ENCODE measurements at regions of chr7 and their contacts with region 1.

Region 1: GRCh38 chr7:21261627-21262594 is 166.0 kb upstream of the SP4 start:
- DNase-seq: peak; percentile 12
- ATAC-seq: peak; percentile 99
- H3K4me3 ChIP-seq: no peak overlapping the region
- H3K27ac ChIP-seq: no peak overlapping the region
- H3K4me1 ChIP-seq: peaks cover 2% of the 10 kb centered on the region; the same call in 1 of the 2 replicates
- H3K27me3 ChIP-seq: no peaks in the 10 kb centered on the region
- CTCF ChIP-seq: peak; percentile 62 to 79 (median 72)
- EP300 ChIP-seq: no peak
- POLR2A ChIP-seq: no peak
- RAD21 ChIP-seq: peak; percentile 83

Region 2: GRCh38 chr7:21192657-21193056 is 69.3 kb before region 1 on chr7:
- CTCF ChIA-PET with region 1: no interaction called
- POLR2A ChIA-PET with region 1: no interaction called
- RAD21 ChIA-PET with region 1: no interaction called
- SMC1A ChIA-PET with region 1: no interaction called
- in situ Hi-C with region 1: no loop called
- intact Hi-C with region 1: no loop called
- DNase-seq: no peak
- ATAC-seq: no peak
- H3K4me3 ChIP-seq: no peak overlapping the region
- H3K27ac ChIP-seq: no peak overlapping the region
- H3K4me1 ChIP-seq: no peaks in the 10 kb centered on the region
- H3K27me3 ChIP-seq: no peaks in the 10 kb centered on the region
- CTCF ChIP-seq: no peak
- EP300 ChIP-seq: no peak
- POLR2A ChIP-seq: no peak
- RAD21 ChIP-seq: no peak

Region 3: GRCh38 chr7:21281183-21281582 is 19.3 kb after region 1 on chr7:
- CTCF ChIA-PET with region 1: interaction called, 13 read pairs
- POLR2A ChIA-PET with region 1: no interaction called
- RAD21 ChIA-PET with region 1: interaction called, 3 read pairs
- SMC1A ChIA-PET with region 1: interaction called, 14 read pairs
- in situ Hi-C with region 1: no loop called
- intact Hi-C with region 1: no loop called
- DNase-seq: no peak
- ATAC-seq: no peak
- H3K4me3 ChIP-seq: no peak overlapping the region
- H3K27ac ChIP-seq: no peak overlapping the region
- H3K4me1 ChIP-seq: no peaks in the 10 kb centered on the region
- H3K27me3 ChIP-seq: no peaks in the 10 kb centered on the region
- CTCF ChIP-seq: no peak
- EP300 ChIP-seq: no peak
- POLR2A ChIP-seq: no peak
- RAD21 ChIP-seq: no peak

Region 4: DNA sequence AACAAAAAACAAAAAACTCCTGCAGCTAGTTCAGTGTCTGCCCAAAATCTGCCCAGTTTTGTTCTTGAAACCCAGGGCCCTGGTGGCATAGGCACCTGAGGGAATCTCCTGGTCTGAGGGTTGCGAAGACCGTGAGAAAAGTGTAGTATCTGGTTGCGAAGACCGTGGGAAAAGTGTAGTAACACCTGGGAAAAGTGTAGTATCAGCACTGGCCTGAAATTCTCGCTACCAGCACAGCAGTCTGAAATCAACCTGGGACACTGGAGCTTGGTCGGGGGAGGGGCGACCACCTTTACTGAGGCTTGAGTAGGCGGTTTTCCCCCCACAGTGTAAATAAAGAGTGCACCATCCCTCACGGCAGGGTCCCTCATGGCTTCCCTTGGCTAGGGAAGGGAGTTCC is 83.5 kb after region 1 on chr7:
- CTCF ChIA-PET with region 1: interaction called, 4 read pairs
- POLR2A ChIA-PET with region 1: interaction called, 4 read pairs
- RAD21 ChIA-PET with region 1: interaction called, 15 read pairs
- SMC1A ChIA-PET with region 1: interaction called, 13 read pairs
- in situ Hi-C with region 1: no loop called
- intact Hi-C with region 1: no loop called
- DNase-seq: peak; percentile 87
- ATAC-seq: peak; percentile 77
- H3K4me3 ChIP-seq: no peak overlapping the region
- H3K27ac ChIP-seq: peak overlapping the region; percentile 83
- H3K4me1 ChIP-seq: peaks cover 27% of the 10 kb centered on the region
- H3K27me3 ChIP-seq: no peaks in the 10 kb centered on the region
- CTCF ChIP-seq: no peak
- EP300 ChIP-seq: no peak
- POLR2A ChIP-seq: no peak
- RAD21 ChIP-seq: peak; percentile 23; the same call in 1 of the 2 replicates

Region 5: GRCh38 chr7:21383227-21384220 is 121.6 kb after region 1 on chr7:
- CTCF ChIA-PET with region 1: interaction called, 13 read pairs
- POLR2A ChIA-PET with region 1: no interaction called
- RAD21 ChIA-PET with region 1: interaction called, 12 read pairs
- SMC1A ChIA-PET with region 1: interaction called, 10 read pairs
- in situ Hi-C with region 1: no loop called
- intact Hi-C with region 1: no loop called
- DNase-seq: no peak
- ATAC-seq: peak; percentile 88
- H3K4me3 ChIP-seq: no peak overlapping the region
- H3K27ac ChIP-seq: peak overlapping the region; percentile 72
- H3K4me1 ChIP-seq: peaks cover 13% of the 10 kb centered on the region
- H3K27me3 ChIP-seq: no peaks in the 10 kb centered on the region
- CTCF ChIP-seq: no peak
- EP300 ChIP-seq: no peak
- POLR2A ChIP-seq: no peak
- RAD21 ChIP-seq: no peak

Region 6: GRCh38 chr7:21427182-21427870 is 165.4 kb after region 1 on chr7:
- CTCF ChIA-PET with region 1: interaction called, 13 read pairs
- POLR2A ChIA-PET with region 1: interaction called, 4 read pairs
- RAD21 ChIA-PET with region 1: interaction called, 6 read pairs
- SMC1A ChIA-PET with region 1: interaction called, 8 read pairs
- in situ Hi-C with region 1: no loop called
- intact Hi-C with region 1: loop called (anchors 2 kb)
- DNase-seq: peak; percentile 92
- ATAC-seq: peak; percentile 87
- H3K4me3 ChIP-seq: peak overlapping the region; percentile 93
- H3K27ac ChIP-seq: peak overlapping the region; percentile 97
- H3K4me1 ChIP-seq: peaks cover 15% of the 10 kb centered on the region
- H3K27me3 ChIP-seq: no peaks in the 10 kb centered on the region
- CTCF ChIP-seq: peak in 2 of 3 experiments; percentile 3 to 15; a peak in 1 of 6 replicates
- EP300 ChIP-seq: 0 out of 4 replicates have a peak, but pooled peaks have one; percentile 0 to 34
- POLR2A ChIP-seq: peak; percentile 67
- RAD21 ChIP-seq: no peak

Region 7: DNA sequence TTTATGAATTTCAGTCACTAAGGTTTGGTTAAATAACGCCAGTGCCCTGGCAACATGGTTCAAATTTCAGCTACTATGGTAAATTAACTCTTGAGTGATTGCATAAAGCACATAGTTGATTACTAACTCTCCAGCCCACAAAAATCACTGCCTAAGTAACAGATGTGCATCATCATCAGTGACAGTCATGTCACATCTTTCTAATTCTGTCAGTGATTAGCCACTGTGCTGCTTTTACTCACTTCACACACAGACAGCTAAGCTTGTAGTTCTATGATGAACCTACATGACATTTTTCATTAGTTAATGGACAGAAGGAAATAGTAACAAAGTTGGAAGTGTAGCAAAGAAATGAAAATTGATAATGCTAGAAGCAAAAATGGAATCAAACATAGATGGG is 389.8 kb after region 1 on chr7:
- CTCF ChIA-PET with region 1: no interaction called
- POLR2A ChIA-PET with region 1: no interaction called
- RAD21 ChIA-PET with region 1: no interaction called
- SMC1A ChIA-PET with region 1: no interaction called
- in situ Hi-C with region 1: no loop called
- intact Hi-C with region 1: no loop called
- DNase-seq: no peak
- ATAC-seq: no peak
- H3K4me3 ChIP-seq: no peak overlapping the region
- H3K27ac ChIP-seq: no peak overlapping the region
- H3K4me1 ChIP-seq: no peaks in the 10 kb centered on the region
- H3K27me3 ChIP-seq: no peaks in the 10 kb centered on the region; a peak in 1 of 4 replicates
- CTCF ChIP-seq: no peak
- EP300 ChIP-seq: no peak
- POLR2A ChIP-seq: no peak
- RAD21 ChIP-seq: no peak

Region 8: GRCh38 chr7:21767300-21767900 is 505.5 kb after region 1 on chr7:
- CTCF ChIA-PET with region 1: interaction called, 31 read pairs
- POLR2A ChIA-PET with region 1: no interaction called
- RAD21 ChIA-PET with region 1: interaction called, 44 read pairs
- SMC1A ChIA-PET with region 1: interaction called, 55 read pairs
- in situ Hi-C with region 1: loop called (anchors 5 kb)
- intact Hi-C with region 1: no loop called
- DNase-seq: peak; percentile 26
- ATAC-seq: peak; percentile 91
- H3K4me3 ChIP-seq: no peak overlapping the region
- H3K27ac ChIP-seq: no peak overlapping the region
- H3K4me1 ChIP-seq: no peaks in the 10 kb centered on the region
- H3K27me3 ChIP-seq: 0 out of 4 replicates have a peak, but pooled peaks cover 0 to 2% of the 10 kb centered on the region in 2 experiments
- CTCF ChIP-seq: peak; percentile 59 to 81 (median 76); a peak in 5 of 6 replicates
- EP300 ChIP-seq: no peak
- POLR2A ChIP-seq: no peak
- RAD21 ChIP-seq: peak; percentile 92

Measured in GM12878 (cell line).